ENCODE measurements at regions of chr13 and their contacts with region 1.

Region 1: DNA sequence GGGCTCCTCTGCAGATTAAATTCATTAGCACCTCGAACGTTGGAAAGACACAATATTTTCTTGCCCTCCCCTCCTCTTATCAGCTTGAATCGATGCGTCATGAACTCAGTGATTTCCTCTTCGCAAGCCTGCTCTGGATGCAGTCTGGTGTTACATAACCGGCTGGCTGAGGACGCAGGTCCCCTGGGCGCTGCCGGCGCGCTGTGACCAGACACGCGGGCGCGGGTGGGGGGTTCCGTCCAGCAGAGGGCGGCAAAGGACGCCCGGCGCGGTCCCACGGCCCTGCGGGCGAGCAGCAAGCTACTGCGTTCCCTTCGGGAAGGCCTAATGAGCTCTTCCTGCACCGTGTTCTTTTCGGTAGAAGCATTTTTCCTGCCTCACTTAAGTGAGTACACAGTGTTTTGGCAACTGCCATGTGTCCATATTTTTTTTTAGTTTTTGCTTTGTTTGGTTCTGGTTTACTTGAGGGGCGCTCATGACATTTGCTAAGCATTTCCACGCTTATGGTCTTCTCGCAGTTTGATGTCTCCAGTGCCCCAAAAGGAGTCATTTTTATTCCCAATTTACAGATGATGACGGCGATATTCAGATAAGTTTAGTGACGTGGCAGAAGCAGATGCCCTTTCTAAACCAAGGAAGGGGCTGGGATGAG is 112.2 kb upstream of the MBNL2 start:
- DNase-seq: no peak
- ATAC-seq: peak; percentile 99
- H3K4me3 ChIP-seq: no peak overlapping the region
- H3K27ac ChIP-seq: no peak overlapping the region
- H3K4me1 ChIP-seq: no peaks in the 10 kb centered on the region
- H3K27me3 ChIP-seq: no peaks in the 10 kb centered on the region
- CTCF ChIP-seq: peak; percentile 91 to 96 (median 95)
- EP300 ChIP-seq: no peak
- POLR2A ChIP-seq: no peak
- RAD21 ChIP-seq: peak; percentile 94

Region 2: GRCh38 chr13:97124916-97125809 is 15.2 kb after region 1 on chr13:
- CTCF ChIA-PET with region 1: interaction called, 13 read pairs
- POLR2A ChIA-PET with region 1: no interaction called
- RAD21 ChIA-PET with region 1: interaction called, 4 read pairs
- SMC1A ChIA-PET with region 1: interaction called, 8 read pairs
- in situ Hi-C with region 1: no loop called
- intact Hi-C with region 1: no loop called
- DNase-seq: peak; percentile 63
- ATAC-seq: peak; percentile 59
- H3K4me3 ChIP-seq: peak overlapping the region; percentile 41; the same call in 1 of the 2 replicates
- H3K27ac ChIP-seq: no peak overlapping the region
- H3K4me1 ChIP-seq: peaks cover 24% of the 10 kb centered on the region
- H3K27me3 ChIP-seq: no peaks in the 10 kb centered on the region
- CTCF ChIP-seq: peak in 1 of 3 experiments; percentile 13; a peak in 1 of 6 replicates
- EP300 ChIP-seq: no peak
- POLR2A ChIP-seq: no peak
- RAD21 ChIP-seq: no peak

Region 3: DNA sequence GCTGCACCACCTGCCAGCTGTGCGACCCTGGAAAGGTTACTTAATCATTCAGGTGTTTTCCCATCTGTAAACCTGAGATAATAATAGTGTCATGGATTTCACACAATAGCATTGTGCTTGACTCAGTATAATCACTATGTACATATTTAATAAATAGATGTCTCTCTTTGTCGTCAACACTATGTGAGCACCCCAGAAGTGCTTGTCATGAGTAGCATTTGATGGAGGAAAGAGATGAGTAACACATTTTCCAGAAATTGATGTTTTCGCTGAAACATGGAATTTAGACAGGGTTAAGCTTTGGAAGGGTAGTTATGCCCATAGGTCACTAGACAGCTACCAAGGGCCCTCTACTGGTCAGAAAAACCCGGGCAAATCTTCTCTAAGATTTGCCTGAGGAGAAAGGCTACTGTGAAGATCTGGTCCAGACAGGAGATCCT is 102.7 kb after region 1 on chr13:
- CTCF ChIA-PET with region 1: interaction called, 55 read pairs
- POLR2A ChIA-PET with region 1: no interaction called
- RAD21 ChIA-PET with region 1: interaction called, 15 read pairs
- SMC1A ChIA-PET with region 1: interaction called, 11 read pairs
- in situ Hi-C with region 1: no loop called
- intact Hi-C with region 1: loop called (anchors 1 kb)
- DNase-seq: no peak
- ATAC-seq: peak; percentile 84
- H3K4me3 ChIP-seq: no peak overlapping the region
- H3K27ac ChIP-seq: no peak overlapping the region
- H3K4me1 ChIP-seq: peaks cover 7% of the 10 kb centered on the region
- H3K27me3 ChIP-seq: no peaks in the 10 kb centered on the region
- CTCF ChIP-seq: peak; percentile 43 to 60 (median 53)
- EP300 ChIP-seq: no peak
- POLR2A ChIP-seq: no peak
- RAD21 ChIP-seq: peak; percentile 59

Region 4: DNA sequence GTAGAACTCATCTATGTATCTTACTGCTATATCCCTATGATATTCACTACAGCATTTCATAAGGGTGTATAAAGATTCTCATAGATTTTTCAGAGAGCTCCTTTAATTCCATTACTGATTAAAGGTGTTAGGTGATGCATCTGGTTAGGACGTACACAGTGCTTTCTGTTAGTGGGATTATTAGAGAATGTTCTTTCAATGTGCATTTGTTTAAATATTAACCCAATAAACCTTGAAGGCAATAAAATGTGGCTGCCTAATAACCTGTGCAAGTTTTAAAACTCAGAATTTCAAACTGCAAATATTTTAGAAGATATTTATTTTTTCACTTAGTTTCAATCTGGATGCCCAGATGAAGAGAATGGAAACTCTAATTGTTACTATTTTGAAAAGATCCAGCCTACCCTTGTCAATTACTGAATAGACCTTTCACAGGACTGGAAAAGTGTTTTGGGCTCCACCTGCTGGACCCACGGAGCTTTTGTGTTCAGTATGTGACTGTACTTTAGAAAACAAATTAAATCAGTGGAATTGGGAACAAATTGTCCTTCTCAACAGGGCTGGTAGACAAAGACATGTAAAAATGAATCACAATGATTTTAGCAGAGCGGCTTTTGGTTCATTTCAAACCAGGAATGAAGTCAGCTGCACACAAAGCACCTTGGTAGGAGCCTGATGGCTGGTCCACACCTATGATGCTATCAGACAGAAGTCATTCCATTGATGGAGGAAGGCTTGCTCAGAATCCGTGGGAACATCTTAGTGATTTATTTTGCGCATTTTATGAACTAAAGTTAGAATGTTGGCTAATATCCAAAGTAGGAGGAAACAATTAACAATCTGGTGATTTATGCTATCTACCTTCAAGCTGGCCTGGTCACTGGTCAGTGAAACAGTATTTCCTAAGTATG is 234.6 kb after region 1 on chr13:
- CTCF ChIA-PET with region 1: interaction called, 96 read pairs
- POLR2A ChIA-PET with region 1: no interaction called
- RAD21 ChIA-PET with region 1: interaction called, 38 read pairs
- SMC1A ChIA-PET with region 1: interaction called, 38 read pairs
- in situ Hi-C with region 1: no loop called
- intact Hi-C with region 1: loop called (anchors 1 kb)
- DNase-seq: no peak
- ATAC-seq: peak; percentile 93
- H3K4me3 ChIP-seq: no peak overlapping the region
- H3K27ac ChIP-seq: no peak overlapping the region
- H3K4me1 ChIP-seq: no peaks in the 10 kb centered on the region
- H3K27me3 ChIP-seq: no peaks in the 10 kb centered on the region
- CTCF ChIP-seq: peak; percentile 59 to 68 (median 64); a peak in 5 of 6 replicates
- EP300 ChIP-seq: no peak
- POLR2A ChIP-seq: no peak
- RAD21 ChIP-seq: peak; percentile 85

Region 5: DNA sequence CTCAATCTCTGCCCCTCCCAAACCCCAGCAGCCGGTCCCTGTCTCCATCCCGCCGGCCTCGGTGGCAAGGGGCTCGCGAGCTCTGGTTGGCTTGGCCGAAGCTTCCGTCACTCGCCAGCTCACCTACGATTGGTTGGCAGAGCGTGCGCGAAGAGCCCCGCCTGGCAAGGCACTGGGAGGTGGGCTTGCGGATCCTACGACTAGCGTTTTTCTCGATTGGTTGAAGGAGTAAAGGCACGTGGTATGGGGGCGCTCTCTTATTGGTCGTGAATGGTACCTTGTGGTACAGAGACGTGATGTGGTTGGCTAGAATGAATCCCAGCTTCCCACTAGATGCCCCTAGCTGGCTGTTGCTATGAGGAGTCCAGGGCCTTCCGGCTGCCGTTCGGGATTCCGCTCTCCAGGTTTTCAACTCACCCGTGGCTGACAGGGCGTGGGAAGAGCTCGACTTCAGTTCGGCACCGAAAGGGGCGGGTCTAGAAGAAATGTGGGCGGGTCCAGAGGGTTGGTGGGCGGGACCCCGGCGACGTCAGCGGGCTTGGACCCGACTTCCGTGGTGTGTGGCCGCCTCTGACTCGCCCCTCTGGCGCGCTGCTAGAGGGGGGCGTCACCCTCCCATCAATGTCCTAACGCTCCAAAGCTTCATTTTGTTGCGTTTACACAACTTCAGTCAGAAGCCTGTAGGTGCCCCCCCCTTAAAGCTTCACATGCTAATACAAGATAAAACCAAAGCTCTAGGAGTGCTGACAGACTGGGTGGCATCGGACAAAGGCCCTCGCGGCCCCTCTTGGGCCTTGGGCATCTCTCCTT is 323.2 kb after region 1 on chr13:
- CTCF ChIA-PET with region 1: interaction called, 11 read pairs
- POLR2A ChIA-PET with region 1: no interaction called
- RAD21 ChIA-PET with region 1: interaction called, 7 read pairs
- SMC1A ChIA-PET with region 1: interaction called, 3 read pairs
- in situ Hi-C with region 1: no loop called
- intact Hi-C with region 1: loop called (anchors 5 kb)
- DNase-seq: peak; percentile 100
- ATAC-seq: peak; percentile 86
- H3K4me3 ChIP-seq: peak overlapping the region; percentile 82
- H3K27ac ChIP-seq: peak overlapping the region; percentile 98
- H3K4me1 ChIP-seq: peaks cover 6% of the 10 kb centered on the region
- H3K27me3 ChIP-seq: no peaks in the 10 kb centered on the region
- CTCF ChIP-seq: no peak
- EP300 ChIP-seq: peak; percentile 45 to 61; a peak in 3 of 4 replicates
- POLR2A ChIP-seq: peak; percentile 74
- RAD21 ChIP-seq: no peak

Region 6: GRCh38 chr13:97574926-97575325 is 465.0 kb after region 1 on chr13:
- CTCF ChIA-PET with region 1: interaction called, 7 read pairs
- POLR2A ChIA-PET with region 1: interaction called, 4 read pairs
- RAD21 ChIA-PET with region 1: interaction called, 4 read pairs
- SMC1A ChIA-PET with region 1: interaction called, 4 read pairs
- in situ Hi-C with region 1: no loop called
- intact Hi-C with region 1: loop called (anchors 10 kb)
- DNase-seq: no peak
- ATAC-seq: peak; percentile 89
- H3K4me3 ChIP-seq: no peak overlapping the region
- H3K27ac ChIP-seq: no peak overlapping the region
- H3K4me1 ChIP-seq: no peaks in the 10 kb centered on the region
- H3K27me3 ChIP-seq: no peaks in the 10 kb centered on the region; a peak in 1 of 4 replicates
- CTCF ChIP-seq: peak; percentile 57 to 82 (median 75); a peak in 5 of 6 replicates
- EP300 ChIP-seq: no peak
- POLR2A ChIP-seq: no peak
- RAD21 ChIP-seq: peak; percentile 81

Region 7: DNA sequence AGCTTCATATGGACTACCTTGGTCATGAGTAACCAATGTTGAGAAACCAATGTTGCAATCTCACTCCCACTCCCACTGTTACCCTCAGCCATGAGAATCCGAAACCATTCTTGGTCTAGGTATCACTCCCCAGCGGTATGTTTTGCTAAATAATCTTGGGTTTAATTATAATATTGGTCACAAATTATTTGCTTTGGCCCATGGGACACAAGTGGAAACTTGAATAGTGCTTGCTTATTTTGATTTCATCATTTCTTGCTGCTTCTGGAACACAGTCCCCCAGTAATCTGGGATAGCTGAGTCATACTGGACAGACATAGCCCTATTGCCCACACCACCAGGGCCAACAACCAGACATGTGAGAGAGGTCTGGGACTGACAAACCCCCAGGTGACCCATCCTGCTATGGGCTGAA is 671.9 kb after region 1 on chr13:
- CTCF ChIA-PET with region 1: no interaction called
- POLR2A ChIA-PET with region 1: no interaction called
- RAD21 ChIA-PET with region 1: no interaction called
- SMC1A ChIA-PET with region 1: no interaction called
- in situ Hi-C with region 1: no loop called
- intact Hi-C with region 1: no loop called
- DNase-seq: no peak
- ATAC-seq: no peak
- H3K4me3 ChIP-seq: no peak overlapping the region
- H3K27ac ChIP-seq: no peak overlapping the region
- H3K4me1 ChIP-seq: no peaks in the 10 kb centered on the region
- H3K27me3 ChIP-seq: no peaks in the 10 kb centered on the region
- CTCF ChIP-seq: no peak
- EP300 ChIP-seq: no peak
- POLR2A ChIP-seq: no peak
- RAD21 ChIP-seq: no peak

Region 8: GRCh38 chr13:97810152-97810551 is 700.2 kb after region 1 on chr13:
- CTCF ChIA-PET with region 1: no interaction called
- POLR2A ChIA-PET with region 1: no interaction called
- RAD21 ChIA-PET with region 1: no interaction called
- SMC1A ChIA-PET with region 1: no interaction called
- in situ Hi-C with region 1: no loop called
- intact Hi-C with region 1: loop called (anchors 10 kb)
- DNase-seq: no peak
- ATAC-seq: no peak
- H3K4me3 ChIP-seq: no peak overlapping the region
- H3K27ac ChIP-seq: no peak overlapping the region
- H3K4me1 ChIP-seq: no peaks in the 10 kb centered on the region
- H3K27me3 ChIP-seq: no peaks in the 10 kb centered on the region
- CTCF ChIP-seq: peak in 1 of 3 experiments; percentile 17; a peak in 2 of 6 replicates
- EP300 ChIP-seq: no peak
- POLR2A ChIP-seq: no peak
- RAD21 ChIP-seq: peak; percentile 17; the same call in 1 of the 2 replicates

Measured in GM12878 (cell line).